Naive thymus-derived CD4-positive, alpha-beta T cell (primary cell): ENCODE measurements at regions of chr1 and their contacts with region 1.

Region 1: DNA sequence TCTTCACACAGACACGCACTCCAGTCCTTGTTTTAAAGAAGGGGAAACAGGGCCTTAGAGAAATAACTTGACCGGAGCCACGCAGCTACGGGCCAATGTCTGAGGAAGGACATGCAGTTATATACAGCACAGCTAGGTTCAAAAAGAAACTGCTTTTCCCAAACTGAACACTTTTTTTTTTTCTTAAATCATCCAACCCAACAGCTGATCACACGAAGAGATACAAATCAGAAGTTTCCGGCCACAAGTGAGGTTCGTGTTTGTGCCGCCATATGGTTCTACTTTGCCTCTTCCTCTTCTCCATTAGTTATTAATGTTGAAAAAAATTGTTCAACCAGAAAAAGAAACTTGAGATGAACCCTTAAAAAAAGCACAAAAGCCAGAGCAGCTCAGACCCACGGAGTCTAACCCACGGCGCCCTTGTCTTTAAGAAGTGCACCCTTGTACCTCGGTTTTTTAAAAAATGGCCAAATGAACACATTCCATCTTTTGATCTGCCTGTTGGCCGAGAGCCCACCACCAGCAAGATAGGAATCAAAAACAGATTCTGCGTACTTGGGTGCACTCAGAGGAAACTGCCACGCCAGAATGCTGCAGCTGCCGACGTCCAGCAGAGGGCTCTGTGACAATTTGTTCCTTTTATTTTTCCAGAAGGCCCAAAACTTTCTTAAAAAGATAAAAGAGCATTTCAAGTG is 78.9 kb downstream of the SLC66A1 start:
- DNase-seq: peak; percentile 33 to 84 (median 76)
- ATAC-seq: peak; percentile 84
- H3K4me3 ChIP-seq: peak overlapping the region; percentile 46
- H3K4me3 Mint-ChIP-seq: peak overlapping the region; percentile 78 to 90 (median 84)
- H3K27ac ChIP-seq: peak overlapping the region; percentile 60
- H3K27ac Mint-ChIP-seq: peak overlapping the region; percentile 82 to 98 (median 94)
- H3K4me1 ChIP-seq: peaks cover 39 to 47% of the 10 kb centered on the region in 2 donors
- H3K4me1 Mint-ChIP-seq: peaks cover 58 to 91% (median 83%) of the 10 kb centered on the region in 7 donors
- H3K27me3 ChIP-seq: no peaks in the 10 kb centered on the region
- H3K27me3 Mint-ChIP-seq: no peaks in the 10 kb centered on the region

Region 2: GRCh38 chr1:19341201-19342072 is 49.6 kb before region 1 on chr1:
- CTCF ChIA-PET with region 1: no interaction called
- POLR2A ChIA-PET with region 1: no interaction called
- intact Hi-C with region 1: loop called in 1 of 2 experiments (anchors 2 kb)
- DNase-seq: peak; percentile 56 to 79 (median 69)
- ATAC-seq: peak; percentile 90
- H3K4me3 ChIP-seq: no peak overlapping the region
- H3K4me3 Mint-ChIP-seq: no peak overlapping the region
- H3K27ac ChIP-seq: peak overlapping the region; percentile 31
- H3K27ac Mint-ChIP-seq: peak overlapping the region in 8 of 9 donors; percentile 5 to 93 (median 73)
- H3K4me1 ChIP-seq: no peaks in the 10 kb centered on the region
- H3K4me1 Mint-ChIP-seq: peaks cover 0 to 12% (median 7%) of the 10 kb centered on the region in 7 donors
- H3K27me3 ChIP-seq: no peaks in the 10 kb centered on the region
- H3K27me3 Mint-ChIP-seq: no peaks in the 10 kb centered on the region

Region 3: DNA sequence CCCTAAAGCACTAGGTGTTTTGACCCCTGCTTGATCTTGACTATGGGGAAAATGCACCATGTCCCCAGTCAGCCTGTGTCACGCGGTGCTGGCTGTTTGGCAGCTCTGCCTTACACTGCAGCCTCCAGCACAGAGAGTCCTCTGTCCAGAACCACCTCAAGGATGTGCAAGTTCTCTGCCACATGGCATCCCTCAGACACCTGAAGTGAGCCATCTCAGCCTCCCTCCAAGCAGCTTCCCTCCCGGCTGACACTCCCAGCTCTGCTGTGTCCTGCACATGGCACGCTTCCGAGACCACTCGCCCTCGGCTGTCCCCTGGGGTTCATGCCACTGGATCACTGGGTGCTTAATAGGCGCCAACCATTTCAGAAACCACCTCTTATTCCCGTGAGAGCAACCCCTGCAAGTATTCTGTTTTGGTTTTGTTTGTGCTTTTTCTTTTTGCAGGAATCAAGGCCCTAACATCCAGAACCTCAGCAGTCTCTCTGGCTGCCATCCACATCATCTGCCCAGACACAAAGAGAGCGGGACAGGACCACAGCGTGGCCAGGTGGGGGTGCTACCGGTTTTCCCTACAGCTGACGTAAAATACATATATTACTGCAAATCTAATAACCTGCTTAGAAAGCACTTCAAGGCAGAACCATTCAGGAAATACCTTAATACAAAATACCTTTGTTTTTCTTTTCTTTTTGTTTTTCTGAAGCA is 48.6 kb after region 1 on chr1:
- CTCF ChIA-PET with region 1: interaction called, 5 read pairs
- POLR2A ChIA-PET with region 1: no interaction called
- intact Hi-C with region 1: loop called in 1 of 2 experiments (anchors 5 kb)
- DNase-seq: peak in 8 of 9 donors; percentile 22 to 64 (median 55)
- ATAC-seq: peak; percentile 60
- H3K4me3 ChIP-seq: no peak overlapping the region
- H3K4me3 Mint-ChIP-seq: peak overlapping the region; percentile 23 to 68 (median 46)
- H3K27ac ChIP-seq: peak overlapping the region; percentile 36
- H3K27ac Mint-ChIP-seq: peak overlapping the region; percentile 63 to 90 (median 75)
- H3K4me1 ChIP-seq: peaks cover 30 to 66% of the 10 kb centered on the region in 2 donors
- H3K4me1 Mint-ChIP-seq: peaks cover 64 to 98% (median 89%) of the 10 kb centered on the region in 7 donors
- H3K27me3 ChIP-seq: no peaks in the 10 kb centered on the region
- H3K27me3 Mint-ChIP-seq: no peaks in the 10 kb centered on the region

Region 4: GRCh38 chr1:19462781-19463503 is 71.9 kb after region 1 on chr1:
- CTCF ChIA-PET with region 1: interaction called, 4 read pairs
- POLR2A ChIA-PET with region 1: interaction called, 3 read pairs
- intact Hi-C with region 1: loop called (anchors 1 kb)
- DNase-seq: peak in 7 of 9 donors; percentile 69 to 88 (median 82)
- ATAC-seq: peak; percentile 90
- H3K4me3 ChIP-seq: peak overlapping the region; percentile 49
- H3K4me3 Mint-ChIP-seq: peak overlapping the region; percentile 66 to 87 (median 82)
- H3K27ac ChIP-seq: peak overlapping the region; percentile 84
- H3K27ac Mint-ChIP-seq: peak overlapping the region; percentile 86 to 98 (median 95)
- H3K4me1 ChIP-seq: peaks cover 88 to 92% of the 10 kb centered on the region in 2 donors
- H3K4me1 Mint-ChIP-seq: peaks cover 59 to 94% (median 84%) of the 10 kb centered on the region in 7 donors
- H3K27me3 ChIP-seq: no peaks in the 10 kb centered on the region
- H3K27me3 Mint-ChIP-seq: no peaks in the 10 kb centered on the region

Region 5: GRCh38 chr1:19582302-19582701 is 191.3 kb after region 1 on chr1:
- CTCF ChIA-PET with region 1: interaction called, 13 read pairs
- POLR2A ChIA-PET with region 1: no interaction called
- intact Hi-C with region 1: loop called (anchors 1 kb)
- DNase-seq: peak; percentile 37 to 72 (median 59)
- ATAC-seq: peak; percentile 94
- H3K4me3 ChIP-seq: no peak overlapping the region
- H3K4me3 Mint-ChIP-seq: no peak overlapping the region
- H3K27ac ChIP-seq: no peak overlapping the region
- H3K27ac Mint-ChIP-seq: peak overlapping the region in 2 of 9 donors; percentile 15 to 76
- H3K4me1 ChIP-seq: no peaks in the 10 kb centered on the region
- H3K4me1 Mint-ChIP-seq: peaks cover 5 to 15% (median 12%) of the 10 kb centered on the region in 7 donors
- H3K27me3 ChIP-seq: no peaks in the 10 kb centered on the region
- H3K27me3 Mint-ChIP-seq: peaks cover 0 to 8% (median 0%) of the 10 kb centered on the region in 5 donors